Ascending aorta (tissue), 2 donors: ENCODE measurements at regions of chr9 and their contacts with region 1.

Region 1: GRCh38 chr9:33225319-33226149 is 14.4 kb upstream of the SPINK4 start:
- DNase-seq: peak in 1 of 2 donors; percentile 86
- H3K4me3 ChIP-seq: no peak overlapping the region
- H3K27ac ChIP-seq: peak overlapping the region in 1 of 2 donors; percentile 24
- H3K4me1 ChIP-seq: peaks cover 0 to 5% of the 10 kb centered on the region in 2 donors
- H3K27me3 ChIP-seq: no peaks in the 10 kb centered on the region
- CTCF ChIP-seq: peak; percentile 62 to 76 (median 75)

Region 2: DNA sequence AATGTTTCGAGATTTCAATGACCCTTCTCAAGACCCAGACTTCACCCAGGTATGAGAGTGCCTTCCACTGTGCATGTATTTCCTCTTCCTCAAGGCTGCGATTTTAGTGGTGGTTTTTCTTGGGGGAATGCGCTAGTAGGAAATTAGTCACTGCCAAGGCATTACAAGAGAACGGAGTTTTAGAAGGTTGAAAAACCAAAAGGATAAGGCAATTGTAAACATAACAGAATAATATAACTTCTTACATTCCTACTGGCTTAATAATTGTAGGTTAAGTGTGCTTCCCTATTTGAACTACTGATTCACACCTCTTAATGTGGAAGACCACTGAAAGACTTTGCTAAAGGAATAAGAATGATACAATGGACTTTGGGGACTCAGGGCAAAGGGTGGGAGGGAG is 802.2 kb before region 1 on chr9:
- intact Hi-C with region 1: no loop called
- DNase-seq: no peak
- H3K4me3 ChIP-seq: no peak overlapping the region
- H3K27ac ChIP-seq: no peak overlapping the region
- H3K4me1 ChIP-seq: peaks cover 0 to 3% of the 10 kb centered on the region in 2 donors
- H3K27me3 ChIP-seq: no peaks in the 10 kb centered on the region
- CTCF ChIP-seq: no peak

Region 3: DNA sequence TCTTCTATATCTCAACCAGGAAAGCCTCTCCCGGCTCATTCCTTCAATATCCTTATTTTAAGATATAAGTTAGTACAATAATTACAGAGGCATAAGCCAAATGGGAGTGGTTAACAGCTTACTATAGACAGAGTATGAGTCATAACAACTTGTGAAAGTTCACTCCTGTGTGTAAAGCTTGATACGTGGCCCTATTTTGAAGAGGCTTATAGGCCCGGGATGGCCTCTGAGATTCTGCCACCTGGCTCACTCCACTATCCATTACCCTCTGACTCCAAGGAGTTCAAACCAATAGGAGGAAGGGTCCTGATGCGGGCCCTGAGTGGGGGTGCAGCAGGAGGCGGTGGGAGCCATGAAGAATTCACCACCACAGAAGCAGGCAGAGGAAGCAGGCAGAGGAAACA is 95.0 kb before region 1 on chr9:
- intact Hi-C with region 1: loop called (anchors 5 kb)
- DNase-seq: no peak
- H3K4me3 ChIP-seq: no peak overlapping the region
- H3K27ac ChIP-seq: no peak overlapping the region
- H3K4me1 ChIP-seq: peaks cover 4 to 38% of the 10 kb centered on the region in 2 donors
- H3K27me3 ChIP-seq: no peaks in the 10 kb centered on the region
- CTCF ChIP-seq: no peak

Region 4: DNA sequence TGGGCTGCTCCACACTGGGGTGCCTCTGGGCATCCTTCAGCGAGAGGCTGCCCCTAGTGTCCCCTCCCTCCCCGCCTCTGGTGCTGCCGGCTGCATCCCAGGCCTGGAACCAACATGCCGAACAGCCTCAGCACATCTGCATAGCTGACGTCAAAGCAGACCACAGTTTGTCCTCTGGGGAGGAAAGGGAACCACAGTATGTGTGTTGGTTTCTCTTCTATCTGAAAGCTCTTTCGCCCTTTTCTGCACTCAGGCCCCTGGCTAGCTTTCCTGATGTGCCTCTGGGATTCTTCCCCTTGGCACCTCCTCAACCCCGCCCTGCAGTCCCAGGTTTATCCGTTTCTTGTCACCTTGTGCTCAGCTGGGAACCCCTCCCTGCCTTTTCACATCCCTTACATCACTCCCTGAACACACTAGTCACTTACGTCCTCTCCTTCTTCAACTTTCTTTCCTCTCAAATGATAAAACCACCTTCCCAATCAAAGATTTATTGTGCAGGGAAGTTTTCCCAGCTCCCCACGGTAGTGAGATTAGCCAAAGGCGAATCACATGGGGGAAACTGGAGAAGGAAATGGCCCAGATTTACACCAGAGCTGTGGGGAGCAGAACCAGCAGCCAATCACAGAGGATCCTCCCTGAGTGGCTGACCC is 22.9 kb before region 1 on chr9:
- intact Hi-C with region 1: loop called (anchors 2 kb)
- DNase-seq: peak; percentile 40 to 82
- H3K4me3 ChIP-seq: no peak overlapping the region
- H3K27ac ChIP-seq: no peak overlapping the region
- H3K4me1 ChIP-seq: peaks cover 0 to 4% of the 10 kb centered on the region in 2 donors
- H3K27me3 ChIP-seq: no peaks in the 10 kb centered on the region
- CTCF ChIP-seq: no peak

Region 5: DNA sequence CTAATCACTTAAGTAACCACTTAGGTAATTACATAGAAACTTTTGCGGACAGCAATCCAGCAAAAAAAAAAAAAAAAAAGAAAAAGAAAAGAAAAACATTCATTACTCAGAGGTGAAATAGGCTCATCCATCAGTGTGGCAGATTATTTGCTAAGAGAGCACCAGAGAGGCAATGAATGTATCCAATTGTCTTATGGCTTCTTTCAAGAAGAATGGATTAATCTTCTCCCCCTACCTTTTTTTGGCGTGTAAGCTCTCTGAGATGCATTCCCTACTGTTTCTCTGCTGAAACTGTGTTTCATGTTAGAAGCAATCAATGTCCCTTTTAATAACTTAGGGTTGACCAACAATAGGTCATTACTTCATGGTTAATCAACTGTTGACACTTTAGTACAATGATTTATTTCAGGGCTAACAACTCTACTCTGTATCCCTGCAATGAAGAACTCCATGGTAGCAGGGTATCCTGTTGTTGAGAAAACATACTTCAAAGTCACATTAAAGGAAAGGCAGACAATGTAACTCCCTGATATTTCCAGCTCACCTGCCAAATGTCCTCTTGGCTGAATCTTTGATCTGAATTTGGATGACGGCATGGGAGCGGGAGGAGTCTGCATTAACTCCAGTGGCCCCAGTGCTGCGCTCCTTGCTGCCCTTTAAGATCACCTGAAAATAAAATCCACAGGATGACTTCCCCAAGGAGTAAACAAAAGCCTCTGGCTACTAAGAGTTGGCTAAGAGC is 1045.9 kb after region 1 on chr9:
- intact Hi-C with region 1: no loop called
- DNase-seq: no peak
- H3K4me3 ChIP-seq: no peak overlapping the region
- H3K27ac ChIP-seq: no peak overlapping the region
- H3K4me1 ChIP-seq: no peaks in the 10 kb centered on the region
- H3K27me3 ChIP-seq: no peaks in the 10 kb centered on the region
- CTCF ChIP-seq: no peak